ENCODE measurements at regions of chr19 and their contacts with region 1.

Region 1: GRCh38 chr19:47075179-47075810 is 26.9 kb upstream of the TMEM160 start:
- DNase-seq: no peak
- H3K4me3 Mint-ChIP-seq: no peak overlapping the region
- H3K27ac Mint-ChIP-seq: peak overlapping the region; percentile 36
- H3K4me1 Mint-ChIP-seq: peaks cover 3% of the 10 kb centered on the region
- H3K27me3 Mint-ChIP-seq: no peaks in the 10 kb centered on the region

Region 2: GRCh38 chr19:46728693-46729676 is 346.3 kb before region 1 on chr19:
- CTCF ChIA-PET with region 1: no interaction called
- POLR2A ChIA-PET with region 1: no interaction called
- intact Hi-C with region 1: no loop called
- DNase-seq: peak; percentile 82
- H3K4me3 Mint-ChIP-seq: no peak overlapping the region
- H3K27ac Mint-ChIP-seq: no peak overlapping the region
- H3K4me1 Mint-ChIP-seq: peaks cover 18% of the 10 kb centered on the region
- H3K27me3 Mint-ChIP-seq: no peaks in the 10 kb centered on the region

Region 3: GRCh38 chr19:47005873-47006272 is 69.4 kb before region 1 on chr19:
- CTCF ChIA-PET with region 1: no interaction called
- POLR2A ChIA-PET with region 1: no interaction called
- intact Hi-C with region 1: no loop called
- DNase-seq: peak; percentile 30
- H3K4me3 Mint-ChIP-seq: no peak overlapping the region
- H3K27ac Mint-ChIP-seq: no peak overlapping the region
- H3K4me1 Mint-ChIP-seq: no peaks in the 10 kb centered on the region
- H3K27me3 Mint-ChIP-seq: no peaks in the 10 kb centered on the region

Region 4: GRCh38 chr19:47102346-47103060 is 27.2 kb after region 1 on chr19:
- CTCF ChIA-PET with region 1: no interaction called
- POLR2A ChIA-PET with region 1: no interaction called
- intact Hi-C with region 1: no loop called
- DNase-seq: no peak
- H3K4me3 Mint-ChIP-seq: no peak overlapping the region
- H3K27ac Mint-ChIP-seq: no peak overlapping the region
- H3K4me1 Mint-ChIP-seq: peaks cover 58% of the 10 kb centered on the region
- H3K27me3 Mint-ChIP-seq: no peaks in the 10 kb centered on the region

Region 5: DNA sequence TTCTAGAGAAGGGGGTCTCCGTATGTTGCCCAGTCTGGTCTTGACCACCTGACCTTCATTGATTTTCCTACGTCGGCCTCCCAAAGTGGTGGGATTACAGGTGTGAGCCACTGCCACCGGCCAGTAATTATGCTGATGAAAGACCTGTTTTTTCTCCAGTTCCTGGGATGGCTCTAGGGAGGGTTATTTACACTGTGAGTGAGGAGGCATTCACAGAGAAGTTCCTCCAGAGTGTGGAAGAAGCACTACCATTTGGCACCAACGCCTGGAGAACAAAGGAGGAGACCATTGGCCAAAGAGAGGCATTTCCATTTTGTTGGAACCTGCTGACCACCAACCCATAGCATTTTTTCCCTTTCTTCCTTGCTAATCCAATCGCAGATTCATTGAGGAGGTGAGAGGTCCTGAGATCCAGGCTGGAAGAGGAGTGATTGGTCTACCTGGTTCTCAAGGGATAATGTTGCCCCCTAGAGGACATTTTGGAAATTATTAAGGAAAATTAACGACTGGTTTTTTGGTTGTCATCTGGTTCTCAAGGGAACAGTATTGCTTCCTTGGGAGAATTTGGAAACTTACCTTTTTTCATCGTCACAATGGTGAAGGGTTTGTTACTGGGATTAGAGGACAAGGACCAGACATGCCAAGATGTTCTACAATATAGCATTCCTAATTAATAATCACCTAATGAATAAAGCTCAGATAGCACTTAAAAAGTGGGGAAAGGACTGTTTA is 49.8 kb after region 1 on chr19:
- CTCF ChIA-PET with region 1: interaction called, 82 read pairs
- POLR2A ChIA-PET with region 1: no interaction called
- intact Hi-C with region 1: loop called (anchors 1 kb)
- DNase-seq: no peak
- H3K4me3 Mint-ChIP-seq: no peak overlapping the region
- H3K27ac Mint-ChIP-seq: peak overlapping the region; percentile 21
- H3K4me1 Mint-ChIP-seq: peaks cover 2% of the 10 kb centered on the region
- H3K27me3 Mint-ChIP-seq: no peaks in the 10 kb centered on the region

Region 6: GRCh38 chr19:47130591-47131227 is 55.4 kb after region 1 on chr19 and contains the start of gene SAE1:
- CTCF ChIA-PET with region 1: interaction called, 82 read pairs
- POLR2A ChIA-PET with region 1: interaction called, 3 read pairs
- intact Hi-C with region 1: loop called (anchors 1 kb)
- DNase-seq: peak; percentile 97
- H3K4me3 Mint-ChIP-seq: peak within 1 kb of the TSS; percentile 99
- H3K27ac Mint-ChIP-seq: peak within 1 kb of the TSS; percentile 94
- H3K4me1 Mint-ChIP-seq: peaks cover 47% of the 10 kb centered on the region
- H3K27me3 Mint-ChIP-seq: peaks cover 4% of the 10 kb centered on the region
- total RNA-seq, gene SAE1: 154 to 157 TPM

Measured in activated CD4-positive, alpha-beta memory T cell treated with anti-CD3 and anti-CD28 coated beads for 36 hours (primary cell).